Prostate gland (tissue), 2 donors: ENCODE measurements at regions of chr11 and their contacts with region 1.

Region 1: DNA sequence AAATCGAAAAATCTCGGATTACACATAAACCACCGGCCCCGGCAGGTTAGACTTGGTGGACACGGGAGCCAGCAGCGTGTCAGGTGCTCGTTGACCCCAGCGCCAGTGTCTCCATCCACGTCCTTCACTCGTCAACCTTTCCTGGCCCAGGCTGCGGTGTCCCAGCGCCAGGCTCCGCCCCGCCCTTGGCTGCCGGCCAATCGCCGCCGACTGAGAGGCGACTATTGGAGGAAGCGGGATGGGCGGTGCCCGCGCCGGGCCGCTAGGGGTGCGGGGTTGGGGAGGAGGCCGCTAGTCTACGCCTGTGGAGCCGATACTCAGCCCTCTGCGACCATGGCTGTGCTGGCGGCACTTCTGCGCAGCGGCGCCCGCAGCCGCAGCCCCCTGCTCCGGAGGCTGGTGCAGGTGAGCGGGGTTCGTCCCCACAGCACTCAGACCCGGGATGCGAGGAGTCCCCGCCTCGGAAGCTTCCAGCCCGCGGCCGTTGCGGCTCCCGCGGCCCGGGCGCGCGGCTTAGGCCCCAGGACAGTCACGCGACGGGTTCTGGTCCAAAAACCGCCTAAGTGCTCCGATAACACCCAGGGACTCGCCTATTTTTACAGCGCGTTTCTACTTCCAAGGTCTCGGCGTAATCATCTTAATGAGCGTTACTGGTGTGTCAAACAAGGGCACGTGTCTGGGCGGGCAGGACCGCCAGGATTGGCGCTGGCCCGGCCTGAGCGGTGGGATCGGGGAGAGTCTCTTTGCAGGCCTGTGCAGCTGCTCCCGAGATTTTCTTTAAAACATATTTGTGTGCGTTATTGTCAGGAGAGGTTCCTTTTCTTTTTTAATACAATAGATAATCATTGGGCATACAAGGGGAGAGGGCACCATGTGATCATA is at the start of gene ACAT1:
- DNase-seq: peak; percentile 94
- H3K4me3 ChIP-seq: peak within 1 kb of the TSS; percentile 69 to 73
- H3K27ac ChIP-seq: peak within 1 kb of the TSS; percentile 87 to 89
- H3K4me1 ChIP-seq: peaks cover 4% of the 10 kb centered on the region
- H3K27me3 ChIP-seq: no peaks in the 10 kb centered on the region
- CTCF ChIP-seq: peak in 3 of 4 experiments; percentile 40 to 76 (median 69)
- POLR2A ChIP-seq: peak; percentile 70
- total RNA-seq, gene ACAT1: 65.1 to 152 TPM

Region 2: DNA sequence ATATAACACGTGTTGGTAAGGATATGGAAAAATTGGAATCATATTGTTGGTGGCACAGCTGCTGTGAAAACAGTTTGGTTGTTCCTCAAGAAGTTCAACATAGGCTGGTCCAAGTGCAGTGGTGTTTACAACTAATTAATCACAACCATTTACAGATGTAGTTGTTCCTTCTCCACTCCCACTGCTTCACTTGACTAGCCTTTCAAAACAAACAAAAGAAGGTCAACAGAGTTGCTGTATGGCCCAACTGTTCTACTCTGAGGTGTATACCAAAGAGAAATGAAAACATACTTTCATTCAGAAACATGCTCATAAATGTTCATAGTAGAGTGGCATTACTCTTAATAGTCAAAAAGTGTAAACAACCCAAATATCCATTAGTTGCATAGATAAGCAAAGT is 36.7 kb before region 1 on chr11:
- intact Hi-C with region 1: no loop called
- DNase-seq: no peak
- H3K4me3 ChIP-seq: no peak overlapping the region
- H3K27ac ChIP-seq: no peak overlapping the region
- H3K4me1 ChIP-seq: no peaks in the 10 kb centered on the region
- H3K27me3 ChIP-seq: no peaks in the 10 kb centered on the region
- CTCF ChIP-seq: no peak
- POLR2A ChIP-seq: no peak

Region 3: GRCh38 chr11:108222686-108223448 is 101.4 kb after region 1 on chr11 and contains the start of gene ATM:
- intact Hi-C with region 1: loop called (anchors 2 kb)
- DNase-seq: peak; percentile 99
- H3K4me3 ChIP-seq: peak within 1 kb of the TSS; percentile 69 to 76
- H3K27ac ChIP-seq: peak within 1 kb of the TSS; percentile 89 to 97
- H3K4me1 ChIP-seq: no peaks in the 10 kb centered on the region
- H3K27me3 ChIP-seq: no peaks in the 10 kb centered on the region
- CTCF ChIP-seq: peak; percentile 58 to 91 (median 77)
- POLR2A ChIP-seq: peak; percentile 6
- total RNA-seq, gene ATM: 32.9 to 80.9 TPM